GM10248 (cell line): ENCODE measurements at regions of chr5 and their contacts with region 1.

Region 1: GRCh38 chr5:138449501-138450239 is 10.8 kb downstream of the REEP2 start:
- DNase-seq: peak; percentile 95
- CTCF ChIP-seq: peak; percentile 83

Region 2: GRCh38 chr5:138408023-138408422 is 41.6 kb before region 1 on chr5:
- CTCF ChIA-PET with region 1: interaction called, 15 read pairs
- POLR2A ChIA-PET with region 1: no interaction called
- DNase-seq: peak; percentile 47
- CTCF ChIP-seq: no peak

Region 3: GRCh38 chr5:138438724-138439476 is 10.8 kb before region 1 on chr5 and contains the start of gene REEP2:
- CTCF ChIA-PET with region 1: interaction called, 39 read pairs
- POLR2A ChIA-PET with region 1: no interaction called
- DNase-seq: peak; percentile 90
- CTCF ChIP-seq: no peak

Region 4: DNA sequence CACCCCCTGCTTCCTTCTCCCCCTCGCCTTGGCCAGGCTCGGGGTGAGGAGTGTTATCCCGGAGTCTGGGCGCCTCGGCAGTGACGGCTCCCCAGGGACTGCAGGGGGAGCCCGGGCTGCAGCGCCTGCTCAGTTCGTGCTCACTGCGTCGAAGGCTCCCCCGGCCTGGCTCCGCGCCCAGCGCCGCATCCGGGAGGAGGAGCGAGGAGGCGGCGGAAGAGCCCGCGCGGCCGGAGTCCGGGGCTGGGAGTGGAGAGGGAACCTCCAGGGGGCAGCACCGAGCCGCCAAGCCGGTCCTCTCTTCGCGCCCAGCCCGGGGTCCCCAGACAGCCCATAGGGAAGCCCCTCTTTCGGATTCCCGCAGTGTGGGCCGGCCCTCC is 14.3 kb after region 1 on chr5:
- CTCF ChIA-PET with region 1: interaction called, 152 read pairs
- POLR2A ChIA-PET with region 1: interaction called, 15 read pairs
- DNase-seq: peak; percentile 95
- CTCF ChIP-seq: peak; percentile 68

Region 5: GRCh38 chr5:138498376-138498775 is 48.7 kb after region 1 on chr5:
- CTCF ChIA-PET with region 1: interaction called, 115 read pairs
- POLR2A ChIA-PET with region 1: interaction called, 3 read pairs
- DNase-seq: no peak
- CTCF ChIP-seq: no peak

Region 6: GRCh38 chr5:138752951-138753793 is 303.5 kb after region 1 on chr5 and contains the start of gene CTNNA1:
- CTCF ChIA-PET with region 1: no interaction called
- POLR2A ChIA-PET with region 1: no interaction called
- DNase-seq: peak; percentile 92
- CTCF ChIP-seq: no peak